Activated CD4-positive, alpha-beta memory T cell treated with anti-CD3 and anti-CD28 coated beads, Interleukin-2, amount 10 ng/mL, durations not matched to agents 7 days and 5 days (primary cell): ENCODE measurements at regions of chr4 and their contacts with region 1.

Region 1: GRCh38 chr4:15756361-15756861 is 21.7 kb upstream of the CD38 start:
- DNase-seq: peak; percentile 84
- H3K4me3 Mint-ChIP-seq: peak overlapping the region; percentile 79
- H3K27ac Mint-ChIP-seq: peak overlapping the region; percentile 98
- H3K4me1 Mint-ChIP-seq: peaks cover 55% of the 10 kb centered on the region
- H3K27me3 Mint-ChIP-seq: no peaks in the 10 kb centered on the region

Region 2: GRCh38 chr4:15655229-15656037 is 101.0 kb before region 1 on chr4 and contains the start of gene FBXL5:
- CTCF ChIA-PET with region 1: interaction called, 7 read pairs
- POLR2A ChIA-PET with region 1: interaction called, 25 read pairs
- DNase-seq: peak; percentile 83
- H3K4me3 Mint-ChIP-seq: peak within 1 kb of the TSS; percentile 94
- H3K27ac Mint-ChIP-seq: peak within 1 kb of the TSS; percentile 95
- H3K4me1 Mint-ChIP-seq: peaks cover 50% of the 10 kb centered on the region
- H3K27me3 Mint-ChIP-seq: no peaks in the 10 kb centered on the region
- total RNA-seq, gene FBXL5: 43.9 to 44.6 TPM

Region 3: DNA sequence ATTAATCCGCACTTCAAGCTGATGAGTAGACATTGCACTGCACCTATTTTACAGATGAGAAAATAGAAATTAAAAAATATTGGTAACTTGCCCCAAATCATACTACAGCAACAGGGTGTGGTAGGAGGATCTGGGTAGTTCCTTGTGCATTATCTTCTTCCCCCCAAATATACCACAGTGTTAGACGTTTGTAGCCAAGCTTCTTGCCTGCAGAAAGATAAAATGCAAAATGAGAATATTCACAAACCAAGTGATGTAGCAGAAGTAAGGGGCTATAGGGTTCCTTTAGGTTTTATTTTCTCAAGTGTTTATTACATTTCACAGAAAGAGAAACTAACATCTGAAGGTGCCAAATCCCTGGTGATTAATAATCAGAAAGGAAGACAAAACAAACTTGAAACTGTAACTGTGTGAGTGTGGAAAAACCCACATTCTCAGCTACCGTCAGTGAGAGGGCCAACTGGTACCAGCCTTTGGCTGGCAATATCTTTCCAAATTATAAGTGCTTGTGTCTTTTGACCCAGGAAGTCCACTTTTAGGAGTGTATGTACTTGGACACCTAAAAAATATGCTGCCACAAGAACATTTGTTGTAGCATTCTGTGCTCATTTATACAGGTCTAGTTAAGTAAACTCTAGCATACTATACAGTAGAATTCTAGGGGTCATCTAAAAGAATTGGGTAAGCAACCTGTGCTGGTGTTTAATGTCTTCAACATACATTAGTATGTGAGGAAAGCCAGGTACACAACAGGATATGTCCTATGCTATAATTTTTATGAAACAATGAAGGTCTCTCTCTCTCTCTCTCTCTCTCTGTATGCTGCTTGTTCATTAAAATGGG is 15.0 kb after region 1 on chr4:
- CTCF ChIA-PET with region 1: interaction called, 64 read pairs
- POLR2A ChIA-PET with region 1: interaction called, 224 read pairs
- DNase-seq: no peak
- H3K4me3 Mint-ChIP-seq: peak overlapping the region; percentile 25
- H3K27ac Mint-ChIP-seq: peak overlapping the region; percentile 74
- H3K4me1 Mint-ChIP-seq: peaks cover 71% of the 10 kb centered on the region
- H3K27me3 Mint-ChIP-seq: peaks cover 18% of the 10 kb centered on the region

Region 4: GRCh38 chr4:15786743-15787142 is 30.3 kb after region 1 on chr4:
- CTCF ChIA-PET with region 1: interaction called, 69 read pairs
- POLR2A ChIA-PET with region 1: interaction called, 157 read pairs
- DNase-seq: no peak
- H3K4me3 Mint-ChIP-seq: no peak overlapping the region
- H3K27ac Mint-ChIP-seq: no peak overlapping the region
- H3K4me1 Mint-ChIP-seq: peaks cover 56% of the 10 kb centered on the region
- H3K27me3 Mint-ChIP-seq: no peaks in the 10 kb centered on the region

Region 5: GRCh38 chr4:15930314-15930713 is 173.9 kb after region 1 on chr4:
- CTCF ChIA-PET with region 1: no interaction called
- POLR2A ChIA-PET with region 1: no interaction called
- DNase-seq: no peak
- H3K4me3 Mint-ChIP-seq: no peak overlapping the region
- H3K27ac Mint-ChIP-seq: no peak overlapping the region
- H3K4me1 Mint-ChIP-seq: no peaks in the 10 kb centered on the region
- H3K27me3 Mint-ChIP-seq: peaks cover 32% of the 10 kb centered on the region

Region 6: GRCh38 chr4:15956179-15956850 is 199.9 kb after region 1 on chr4:
- CTCF ChIA-PET with region 1: interaction called, 13 read pairs
- POLR2A ChIA-PET with region 1: no interaction called
- DNase-seq: peak; percentile 84
- H3K4me3 Mint-ChIP-seq: no peak overlapping the region
- H3K27ac Mint-ChIP-seq: no peak overlapping the region
- H3K4me1 Mint-ChIP-seq: peaks cover 2% of the 10 kb centered on the region
- H3K27me3 Mint-ChIP-seq: peaks cover 24% of the 10 kb centered on the region